ENCODE measurements at regions of chr2 and their contacts with region 1.

Region 1: DNA sequence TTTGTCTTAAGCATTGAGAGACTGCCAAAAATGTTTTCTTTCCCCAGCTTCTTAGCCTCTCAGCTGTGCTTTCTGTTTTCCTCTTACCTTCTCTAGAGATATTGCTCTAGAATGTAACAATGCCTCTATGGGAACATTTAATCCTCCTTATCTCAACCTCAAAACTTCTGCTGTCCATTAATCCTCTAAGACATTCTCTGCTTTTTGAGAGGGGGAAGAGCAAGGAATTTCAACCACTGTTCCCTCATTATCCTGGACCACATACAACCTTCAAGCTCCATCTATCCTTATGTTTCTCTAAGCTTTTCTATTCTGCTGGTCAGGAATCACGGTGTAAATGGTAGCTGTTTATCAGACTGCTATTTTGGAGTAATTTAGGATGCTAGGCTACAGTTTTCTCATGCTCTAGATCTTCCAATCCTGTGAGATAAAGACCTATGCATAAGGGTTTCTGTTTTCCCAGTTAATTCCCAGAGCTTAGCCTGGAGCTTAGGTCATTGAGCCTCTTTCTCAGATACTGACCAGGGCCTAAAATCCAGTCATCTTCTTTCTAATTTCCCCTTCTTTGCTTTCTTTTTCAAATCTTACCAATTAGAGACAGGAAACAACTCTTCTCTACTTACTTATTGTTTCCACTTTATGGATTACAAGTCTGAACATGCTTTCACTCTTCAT is 282.0 kb downstream of the CALCRL start:
- DNase-seq: no peak
- CTCF ChIP-seq: no peak

Region 2: GRCh38 chr2:187177253-187177652 is 11.2 kb after region 1 on chr2:
- CTCF ChIA-PET with region 1: interaction called, 11 read pairs
- POLR2A ChIA-PET with region 1: no interaction called
- DNase-seq: no peak
- CTCF ChIP-seq: no peak